ENCODE measurements at regions of chr12 and their contacts with region 1.

Region 1: GRCh38 chr12:14664510-14664909 is 31.9 kb downstream of the GUCY2C start:
- DNase-seq: no peak
- ATAC-seq: peak; percentile 85
- H3K4me3 Mint-ChIP-seq: no peak overlapping the region
- H3K27ac Mint-ChIP-seq: no peak overlapping the region
- H3K4me1 Mint-ChIP-seq: peaks cover 14% of the 10 kb centered on the region
- H3K27me3 Mint-ChIP-seq: no peaks in the 10 kb centered on the region
- CTCF ChIP-seq: no peak

Region 2: GRCh38 chr12:13864081-13864673 is 800.3 kb before region 1 on chr12:
- CTCF ChIA-PET with region 1: no interaction called
- POLR2A ChIA-PET with region 1: no interaction called
- intact Hi-C with region 1: loop called (anchors 1 kb)
- DNase-seq: peak; percentile 45
- ATAC-seq: peak; percentile 79
- H3K4me3 Mint-ChIP-seq: no peak overlapping the region
- H3K27ac Mint-ChIP-seq: no peak overlapping the region
- H3K4me1 Mint-ChIP-seq: no peaks in the 10 kb centered on the region
- H3K27me3 Mint-ChIP-seq: peaks cover 29% of the 10 kb centered on the region
- CTCF ChIP-seq: peak; percentile 80

Region 3: DNA sequence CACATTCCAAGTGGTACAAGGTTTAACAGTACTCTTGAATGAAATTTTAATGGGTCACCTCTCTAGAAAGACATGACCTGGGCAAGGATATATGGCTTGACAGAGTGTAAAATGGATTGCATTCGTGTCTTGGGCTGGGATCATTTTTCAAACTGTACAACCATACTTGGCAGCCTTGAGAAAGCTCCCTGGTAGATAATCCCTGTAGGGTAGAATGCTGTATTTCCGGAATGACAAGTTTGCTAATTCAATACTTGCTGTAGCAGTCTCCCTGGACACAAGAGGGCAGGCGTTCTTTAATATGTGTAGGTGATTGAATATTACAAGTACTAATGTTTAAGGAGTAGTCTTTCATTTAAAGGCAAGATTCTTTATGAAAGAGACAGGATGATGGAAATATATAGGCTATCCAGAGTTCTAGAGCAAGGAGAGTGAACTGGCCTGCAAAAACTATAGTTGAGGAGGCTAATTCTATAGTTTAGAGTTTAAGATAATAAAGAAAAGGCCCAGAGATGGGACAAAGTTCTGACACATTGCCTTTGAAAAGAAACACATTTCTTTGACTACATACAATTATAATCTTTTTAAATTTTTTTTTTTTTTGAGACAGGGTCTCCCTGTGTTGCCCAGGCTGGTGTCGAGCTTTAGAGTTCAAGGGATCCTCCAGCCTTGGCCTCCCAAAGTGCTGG is 150.2 kb before region 1 on chr12:
- CTCF ChIA-PET with region 1: interaction called, 3 read pairs
- POLR2A ChIA-PET with region 1: no interaction called
- intact Hi-C with region 1: loop called (anchors 1 kb)
- DNase-seq: no peak
- ATAC-seq: no peak
- H3K4me3 Mint-ChIP-seq: no peak overlapping the region
- H3K27ac Mint-ChIP-seq: no peak overlapping the region
- H3K4me1 Mint-ChIP-seq: no peaks in the 10 kb centered on the region
- H3K27me3 Mint-ChIP-seq: no peaks in the 10 kb centered on the region
- CTCF ChIP-seq: no peak

Region 4: GRCh38 chr12:14567351-14568162 is 97.0 kb before region 1 on chr12 and contains the start of gene PLBD1:
- CTCF ChIA-PET with region 1: interaction called, 7 read pairs
- POLR2A ChIA-PET with region 1: no interaction called
- intact Hi-C with region 1: loop called (anchors 1 kb)
- DNase-seq: peak; percentile 33
- ATAC-seq: peak; percentile 69
- H3K4me3 Mint-ChIP-seq: peak within 1 kb of the TSS; percentile 62
- H3K27ac Mint-ChIP-seq: peak within 1 kb of the TSS; percentile 6
- H3K4me1 Mint-ChIP-seq: peaks cover 8% of the 10 kb centered on the region
- H3K27me3 Mint-ChIP-seq: peaks cover 10% of the 10 kb centered on the region
- CTCF ChIP-seq: no peak
- total RNA-seq, gene PLBD1: 0.33 and 0.56 TPM in 2 replicates

Region 5: GRCh38 chr12:14618983-14619382 is 45.5 kb before region 1 on chr12:
- CTCF ChIA-PET with region 1: no interaction called
- POLR2A ChIA-PET with region 1: no interaction called
- intact Hi-C with region 1: loop called (anchors 10 kb)
- DNase-seq: no peak
- ATAC-seq: no peak
- H3K4me3 Mint-ChIP-seq: peak overlapping the region; percentile 19
- H3K27ac Mint-ChIP-seq: peak overlapping the region; percentile 9
- H3K4me1 Mint-ChIP-seq: peaks cover 48% of the 10 kb centered on the region
- H3K27me3 Mint-ChIP-seq: no peaks in the 10 kb centered on the region
- CTCF ChIP-seq: no peak

Region 6: GRCh38 chr12:14716848-14717444 is 52.4 kb after region 1 on chr12:
- CTCF ChIA-PET with region 1: interaction called, 3 read pairs
- POLR2A ChIA-PET with region 1: no interaction called
- intact Hi-C with region 1: loop called (anchors 1 kb)
- DNase-seq: no peak
- ATAC-seq: peak; percentile 75
- H3K4me3 Mint-ChIP-seq: no peak overlapping the region
- H3K27ac Mint-ChIP-seq: no peak overlapping the region
- H3K4me1 Mint-ChIP-seq: peaks cover 2% of the 10 kb centered on the region
- H3K27me3 Mint-ChIP-seq: peaks cover 8% of the 10 kb centered on the region
- CTCF ChIP-seq: peak; percentile 15